H1 (cell line): ENCODE measurements at regions of chr7 and their contacts with region 1.

Region 1: GRCh38 chr7:99558306-99559174 is at the start of gene ZNF655:
- DNase-seq: peak in 1 of 2 experiments; percentile 98
- H3K4me3 ChIP-seq: peak within 1 kb of the TSS; percentile 78 to 100 (median 96)
- H3K27ac ChIP-seq: peak within 1 kb of the TSS; percentile 98
- H3K4me1 ChIP-seq: peaks cover 0 to 7% (median 0%) of the 10 kb centered on the region in 4 experiments; a peak in 5 of 7 replicates
- H3K27me3 ChIP-seq: no peaks in the 10 kb centered on the region
- CTCF ChIP-seq: no peak
- EP300 ChIP-seq: no peak
- POLR2A ChIP-seq: peak; percentile 81 to 87
- RAD21 ChIP-seq: peak in 1 of 2 experiments; percentile 7; a peak in 1 of 4 replicates
- total RNA-seq, gene ZNF655: 36.7 and 37.8 TPM in 2 replicates

Region 2: GRCh38 chr7:98745722-98746318 is 812.7 kb before region 1 on chr7:
- CTCF ChIA-PET with region 1: no interaction called
- POLR2A ChIA-PET with region 1: no interaction called
- DNase-seq: peak in 1 of 2 experiments; percentile 97
- H3K4me3 ChIP-seq: no peak overlapping the region
- H3K27ac ChIP-seq: no peak overlapping the region
- H3K4me1 ChIP-seq: no peaks in the 10 kb centered on the region; a peak in 1 of 7 replicates
- H3K27me3 ChIP-seq: no peaks in the 10 kb centered on the region
- CTCF ChIP-seq: peak; percentile 86 to 89 (median 86)
- EP300 ChIP-seq: no peak
- POLR2A ChIP-seq: no peak
- RAD21 ChIP-seq: peak; percentile 79 to 83

Region 3: GRCh38 chr7:99459087-99459486 is 99.5 kb before region 1 on chr7:
- CTCF ChIA-PET with region 1: interaction called, 3 read pairs
- POLR2A ChIA-PET with region 1: interaction called, 12 read pairs
- DNase-seq: no peak
- H3K4me3 ChIP-seq: no peak overlapping the region
- H3K27ac ChIP-seq: no peak overlapping the region
- H3K4me1 ChIP-seq: no peaks in the 10 kb centered on the region; a peak in 1 of 7 replicates
- H3K27me3 ChIP-seq: no peaks in the 10 kb centered on the region
- CTCF ChIP-seq: peak; percentile 52 to 82 (median 61)
- EP300 ChIP-seq: no peak
- POLR2A ChIP-seq: peak; percentile 41 to 44; a peak in 1 of 3 replicates
- RAD21 ChIP-seq: peak; percentile 40 to 56; a peak in 3 of 4 replicates

Region 4: DNA sequence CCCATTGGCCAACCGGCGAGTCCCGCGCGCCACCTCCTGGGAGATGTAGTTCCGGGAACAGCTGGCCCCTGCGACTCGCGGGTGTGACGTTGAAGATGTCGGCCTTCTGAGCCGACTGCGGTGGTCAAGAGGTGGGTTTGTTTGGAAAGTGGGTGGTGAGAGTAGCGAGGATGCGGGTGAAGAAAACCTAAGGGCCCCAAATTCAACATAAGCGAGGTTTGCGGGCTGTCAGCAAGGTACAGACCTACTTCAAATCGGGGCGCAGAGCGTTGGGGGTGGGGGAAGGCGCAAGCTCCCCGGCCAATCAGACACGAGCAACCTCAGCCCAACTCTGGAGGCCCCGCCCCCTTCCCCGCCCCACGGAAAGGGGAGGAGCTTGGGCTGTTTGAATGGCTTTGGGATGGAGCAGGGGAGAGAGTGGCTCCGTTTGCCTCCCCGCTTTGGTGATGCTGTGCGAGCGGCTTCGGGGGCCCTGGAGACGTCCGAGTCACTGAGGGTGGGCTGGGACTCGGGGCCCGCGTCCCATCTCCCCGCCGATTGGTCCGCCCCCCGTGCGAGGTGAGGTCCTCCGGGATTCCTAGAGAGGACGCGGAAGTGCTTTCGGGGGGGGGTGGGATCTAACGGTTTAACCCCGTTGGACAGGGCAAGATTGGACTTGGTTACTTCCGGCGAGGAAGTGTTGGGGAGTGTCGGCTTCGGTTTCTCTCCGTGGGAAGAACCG is 53.8 kb before region 1 on chr7 and contains the start of gene ZKSCAN5:
- CTCF ChIA-PET with region 1: interaction called, 3 read pairs
- POLR2A ChIA-PET with region 1: interaction called, 26 read pairs
- DNase-seq: peak; percentile 82 to 99
- H3K4me3 ChIP-seq: peak within 1 kb of the TSS; percentile 89 to 97 (median 94)
- H3K27ac ChIP-seq: peak within 1 kb of the TSS; percentile 89
- H3K4me1 ChIP-seq: peaks cover 0 to 7% (median 4%) of the 10 kb centered on the region in 4 experiments; a peak in 5 of 7 replicates
- H3K27me3 ChIP-seq: no peaks in the 10 kb centered on the region
- CTCF ChIP-seq: no peak
- EP300 ChIP-seq: peak in 1 of 2 experiments; percentile 58; a peak in 1 of 3 replicates
- POLR2A ChIP-seq: peak; percentile 78 to 83
- RAD21 ChIP-seq: no peak
- total RNA-seq, gene ZKSCAN5: 12.9 and 13.5 TPM in 2 replicates

Region 5: GRCh38 chr7:99571768-99572167 is 13.2 kb after region 1 on chr7:
- CTCF ChIA-PET with region 1: no interaction called
- POLR2A ChIA-PET with region 1: interaction called, 56 read pairs
- DNase-seq: no peak
- H3K4me3 ChIP-seq: no peak overlapping the region
- H3K27ac ChIP-seq: no peak overlapping the region
- H3K4me1 ChIP-seq: peaks cover 0 to 6% (median 2%) of the 10 kb centered on the region in 4 experiments; a peak in 1 of 7 replicates
- H3K27me3 ChIP-seq: no peaks in the 10 kb centered on the region
- CTCF ChIP-seq: no peak
- EP300 ChIP-seq: no peak
- POLR2A ChIP-seq: no peak
- RAD21 ChIP-seq: no peak

Region 6: DNA sequence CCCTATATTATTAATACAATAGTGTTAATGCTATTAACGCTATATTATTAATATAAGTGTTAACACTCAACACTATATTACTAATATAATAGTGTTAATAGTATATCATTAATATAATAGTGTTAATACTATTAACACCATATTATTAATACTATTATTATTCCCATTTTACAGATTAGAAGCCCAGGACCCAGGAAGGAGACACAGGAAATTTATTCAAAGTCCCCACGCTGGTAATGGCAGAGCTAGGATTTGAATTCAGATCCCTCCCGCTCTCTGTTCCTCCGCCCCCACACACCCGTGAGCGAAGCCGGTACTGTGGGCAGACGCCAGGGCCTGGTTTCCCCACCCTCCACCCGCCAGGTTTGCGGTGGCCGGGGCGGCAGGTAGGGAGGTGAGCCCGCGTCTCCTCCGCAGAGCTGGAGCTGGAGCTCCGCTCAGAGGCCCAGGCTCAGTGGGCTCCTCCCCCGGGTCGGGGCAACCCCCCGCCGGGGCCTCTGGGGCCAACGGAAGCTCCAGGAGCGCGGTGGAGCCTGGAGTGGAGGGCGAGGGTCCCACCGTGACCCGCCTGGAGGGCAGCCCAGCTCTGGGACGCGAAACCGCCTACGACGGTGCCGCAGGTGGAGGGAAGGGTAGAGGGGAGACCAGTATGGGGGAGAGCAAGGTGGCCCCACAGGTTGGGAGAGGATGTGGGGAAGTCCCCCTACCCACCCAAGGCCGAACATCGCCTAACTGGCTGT is 39.4 kb after region 1 on chr7 and contains the start of gene TMEM225B:
- CTCF ChIA-PET with region 1: interaction called, 3 read pairs
- POLR2A ChIA-PET with region 1: interaction called, 10 read pairs
- DNase-seq: peak in 1 of 2 experiments; percentile 55
- H3K4me3 ChIP-seq: no peak within 1 kb of the TSS
- H3K27ac ChIP-seq: no peak within 1 kb of the TSS
- H3K4me1 ChIP-seq: peaks cover 0 to 3% (median 2%) of the 10 kb centered on the region in 4 experiments; a peak in 3 of 7 replicates
- H3K27me3 ChIP-seq: no peaks in the 10 kb centered on the region
- CTCF ChIP-seq: no peak
- EP300 ChIP-seq: no peak
- POLR2A ChIP-seq: no peak
- RAD21 ChIP-seq: no peak
- total RNA-seq, gene TMEM225B: not detected in 2 replicates

Region 7: DNA sequence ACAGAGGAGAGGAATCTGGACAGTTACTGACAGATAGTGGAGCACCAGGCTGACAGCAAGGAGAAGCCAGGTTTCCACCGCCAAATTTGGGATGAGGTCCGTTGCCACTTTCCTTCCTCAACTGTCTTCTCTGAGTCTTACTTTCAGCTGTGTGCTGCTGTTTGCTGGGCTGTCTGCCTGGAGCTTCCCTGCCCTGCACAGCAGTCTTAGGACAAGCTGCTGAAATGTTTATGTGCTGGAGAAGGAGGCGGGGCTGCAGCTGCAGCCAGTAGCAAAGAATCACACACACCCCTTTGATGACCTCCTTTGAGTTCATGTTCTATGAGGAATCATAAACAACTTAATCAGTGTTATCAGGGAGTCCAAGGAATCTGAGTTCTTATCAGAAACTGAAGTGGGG is 193.8 kb after region 1 on chr7:
- CTCF ChIA-PET with region 1: no interaction called
- POLR2A ChIA-PET with region 1: no interaction called
- DNase-seq: no peak
- H3K4me3 ChIP-seq: no peak overlapping the region
- H3K27ac ChIP-seq: no peak overlapping the region
- H3K4me1 ChIP-seq: no peaks in the 10 kb centered on the region
- H3K27me3 ChIP-seq: no peaks in the 10 kb centered on the region
- CTCF ChIP-seq: no peak
- EP300 ChIP-seq: no peak
- POLR2A ChIP-seq: no peak
- RAD21 ChIP-seq: no peak

Region 8: DNA sequence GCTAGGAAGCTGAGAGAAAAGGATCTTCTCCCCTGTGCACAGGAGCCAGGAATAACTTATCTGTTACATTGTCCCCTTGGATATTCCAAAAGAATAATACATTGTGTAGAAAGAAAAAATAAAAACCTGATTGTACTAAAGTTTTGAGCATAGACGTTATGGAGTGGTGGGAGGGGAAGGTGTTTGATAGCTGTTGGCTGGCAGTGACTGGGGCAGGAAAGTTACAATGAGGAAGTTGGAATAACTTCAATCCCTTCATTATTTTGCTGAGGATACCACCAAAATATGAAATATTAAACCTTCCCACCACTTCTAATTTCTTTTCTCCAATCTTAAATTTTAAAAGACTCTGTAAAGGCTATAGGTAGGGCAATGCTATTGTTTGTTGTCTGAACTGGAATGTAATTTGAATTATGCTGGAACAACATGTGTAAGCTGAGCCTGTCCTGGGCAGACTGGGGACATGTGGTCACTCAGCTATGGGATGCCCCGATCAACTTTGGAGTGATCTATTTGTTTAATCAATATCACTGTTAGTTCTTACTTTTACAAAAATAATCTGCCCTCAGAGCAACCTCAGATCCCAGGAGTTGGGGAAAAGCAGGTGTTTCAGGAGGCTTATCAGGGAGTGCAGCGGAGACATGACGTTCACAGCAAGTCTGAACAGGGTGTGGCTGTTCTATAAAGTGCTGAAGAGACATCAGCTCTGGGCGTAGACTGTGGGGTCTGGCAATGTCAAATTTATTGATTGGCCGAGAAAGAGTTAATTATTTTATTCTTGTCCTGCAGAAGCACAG is 290.1 kb after region 1 on chr7:
- CTCF ChIA-PET with region 1: no interaction called
- POLR2A ChIA-PET with region 1: no interaction called
- DNase-seq: no peak
- H3K4me3 ChIP-seq: no peak overlapping the region
- H3K27ac ChIP-seq: no peak overlapping the region
- H3K4me1 ChIP-seq: peaks cover 0 to 3% (median 0%) of the 10 kb centered on the region in 4 experiments; a peak in 2 of 7 replicates
- H3K27me3 ChIP-seq: no peaks in the 10 kb centered on the region
- CTCF ChIP-seq: no peak
- EP300 ChIP-seq: no peak
- POLR2A ChIP-seq: no peak
- RAD21 ChIP-seq: no peak

Region 9: GRCh38 chr7:100148559-100149350 is 590.2 kb after region 1 on chr7 and contains the start of gene LAMTOR4:
- CTCF ChIA-PET with region 1: no interaction called
- POLR2A ChIA-PET with region 1: no interaction called
- DNase-seq: peak; percentile 94 to 99
- H3K4me3 ChIP-seq: peak within 1 kb of the TSS; percentile 71 to 89 (median 78)
- H3K27ac ChIP-seq: no peak within 1 kb of the TSS
- H3K4me1 ChIP-seq: peaks cover 0 to 4% (median under 1%) of the 10 kb centered on the region in 4 experiments; a peak in 3 of 7 replicates
- H3K27me3 ChIP-seq: no peaks in the 10 kb centered on the region
- CTCF ChIP-seq: peak in 1 of 3 experiments; percentile 18; a peak in 2 of 4 replicates
- EP300 ChIP-seq: no peak
- POLR2A ChIP-seq: peak; percentile 38 to 69; a peak in 2 of 3 replicates
- RAD21 ChIP-seq: no peak
- total RNA-seq, gene LAMTOR4: 153 and 161 TPM in 2 replicates